ENCODE measurements at regions of chr1 and their contacts with region 1.

Region 1: DNA sequence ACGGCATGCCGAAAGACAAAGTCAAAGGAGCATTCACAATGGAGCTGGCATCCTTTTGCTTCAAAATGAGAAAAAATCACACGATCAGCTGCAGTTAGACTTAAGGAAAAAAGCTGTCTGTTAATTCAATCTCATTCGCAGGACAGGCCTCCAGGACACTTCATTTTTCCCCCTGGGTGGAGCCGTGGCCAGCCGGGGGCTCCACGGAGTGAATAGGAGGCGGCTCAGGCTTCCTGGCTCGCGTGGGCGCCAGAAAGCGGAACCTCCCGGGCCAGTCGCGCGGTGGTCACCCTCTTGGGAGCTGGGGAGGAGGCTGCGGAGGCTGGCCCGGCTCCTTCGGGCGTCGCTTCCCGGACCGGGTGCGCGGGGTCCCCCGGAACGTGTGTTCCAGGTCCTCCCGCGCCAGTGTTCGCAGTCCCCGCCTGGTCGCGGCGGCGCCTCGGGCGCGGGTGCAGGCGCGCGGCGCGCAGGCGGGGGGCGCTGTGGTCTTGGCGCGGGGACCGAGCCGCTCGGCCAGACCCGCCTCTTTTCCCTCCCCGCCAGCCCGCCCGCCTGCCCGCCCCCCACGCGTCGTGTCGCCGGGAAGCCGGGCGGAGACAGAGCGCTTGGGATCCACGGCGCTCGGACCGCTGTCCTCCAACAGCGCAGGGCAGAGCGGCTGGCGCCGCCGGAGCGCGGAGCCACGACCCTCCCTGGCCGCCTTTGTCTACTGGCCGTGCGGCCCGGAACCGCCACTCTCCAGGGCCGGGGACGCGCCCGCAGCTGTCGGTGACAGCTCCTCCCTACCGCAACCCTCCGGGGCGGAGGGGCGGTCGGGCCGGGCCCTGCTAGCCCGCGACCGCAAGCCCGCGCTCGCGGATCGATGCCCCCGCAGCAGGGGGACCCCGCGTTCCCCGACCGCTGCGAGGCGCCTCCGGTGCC is at the start of gene RHOU:
- DNase-seq: peak; percentile 92
- H3K4me3 ChIP-seq: peak within 1 kb of the TSS; percentile 89 to 97 (median 96)
- H3K27ac ChIP-seq: peak within 1 kb of the TSS; percentile 90 to 95 (median 92)
- H3K4me1 ChIP-seq: peaks cover 15 to 47% (median 41%) of the 10 kb centered on the region in 4 donors
- H3K27me3 ChIP-seq: no peaks in the 10 kb centered on the region
- CTCF ChIP-seq: peak; percentile 94 to 96 (median 94)
- EP300 ChIP-seq: no peak
- POLR2A ChIP-seq: peak; percentile 36
- total RNA-seq, gene RHOU: 24.1 to 36.0 (median 26.0) TPM

Region 2: GRCh38 chr1:228794810-228795209 is 59.7 kb after region 1 on chr1:
- intact Hi-C with region 1: loop called (anchors 5 kb)
- DNase-seq: no peak
- H3K4me3 ChIP-seq: no peak overlapping the region
- H3K27ac ChIP-seq: no peak overlapping the region
- H3K4me1 ChIP-seq: peaks cover 0 to 29% (median 22%) of the 10 kb centered on the region in 4 donors
- H3K27me3 ChIP-seq: no peaks in the 10 kb centered on the region
- CTCF ChIP-seq: no peak
- EP300 ChIP-seq: no peak
- POLR2A ChIP-seq: no peak

Region 3: GRCh38 chr1:228902781-228903433 is 167.8 kb after region 1 on chr1:
- intact Hi-C with region 1: loop called (anchors 10 kb)
- DNase-seq: peak; percentile 98
- H3K4me3 ChIP-seq: peak overlapping the region in 2 of 4 donors; percentile 3 to 8
- H3K27ac ChIP-seq: peak overlapping the region; percentile 62 to 80 (median 70)
- H3K4me1 ChIP-seq: peaks cover 9 to 51% (median 47%) of the 10 kb centered on the region in 4 donors
- H3K27me3 ChIP-seq: no peaks in the 10 kb centered on the region
- CTCF ChIP-seq: no peak
- EP300 ChIP-seq: no peak
- POLR2A ChIP-seq: no peak

Region 4: GRCh38 chr1:229156872-229157271 is 421.7 kb after region 1 on chr1:
- intact Hi-C with region 1: loop called (anchors 2 kb)
- DNase-seq: no peak
- H3K4me3 ChIP-seq: no peak overlapping the region
- H3K27ac ChIP-seq: peak overlapping the region in 2 of 4 donors; percentile 22 to 30
- H3K4me1 ChIP-seq: peaks cover 7 to 25% (median 21%) of the 10 kb centered on the region in 4 donors
- H3K27me3 ChIP-seq: no peaks in the 10 kb centered on the region
- CTCF ChIP-seq: peak; percentile 59 to 75 (median 72)
- EP300 ChIP-seq: no peak
- POLR2A ChIP-seq: no peak

Region 5: DNA sequence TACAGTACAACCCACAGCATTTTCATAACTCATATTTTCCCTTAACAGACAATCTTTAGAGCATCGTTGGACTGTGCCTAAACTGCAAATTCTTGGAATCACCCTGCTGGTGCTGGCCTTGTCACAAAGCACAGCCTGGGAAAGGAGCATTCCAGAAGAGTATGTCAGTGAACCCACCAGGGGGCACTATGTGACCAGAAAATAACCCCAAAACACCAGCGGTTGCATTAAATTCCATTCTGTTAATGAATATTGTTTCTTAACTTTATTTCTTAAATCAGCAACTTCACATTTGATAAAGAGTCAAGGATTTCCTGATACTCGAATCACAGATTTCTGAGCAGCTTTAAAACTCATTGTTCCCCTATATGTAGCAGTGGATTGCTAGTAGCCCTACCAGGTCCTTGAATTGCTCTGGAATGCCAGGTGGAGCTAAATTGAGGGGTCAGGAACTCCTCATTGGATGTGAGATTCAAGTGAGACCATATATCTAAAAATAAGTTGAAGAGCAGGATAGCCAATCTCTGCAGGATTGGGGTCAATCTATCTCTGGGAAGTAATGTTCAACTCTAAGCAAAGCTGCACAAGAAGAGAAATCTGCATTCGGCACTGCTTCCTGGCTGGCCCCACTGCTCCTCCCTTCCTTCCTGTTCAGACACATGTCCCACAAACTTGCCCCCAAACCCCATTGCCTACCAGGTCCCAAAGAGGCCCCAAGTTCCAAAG is 523.1 kb after region 1 on chr1:
- intact Hi-C with region 1: loop called (anchors 10 kb)
- DNase-seq: no peak
- H3K4me3 ChIP-seq: no peak overlapping the region
- H3K27ac ChIP-seq: no peak overlapping the region
- H3K4me1 ChIP-seq: peaks cover 7 to 15% (median 12%) of the 10 kb centered on the region in 4 donors
- H3K27me3 ChIP-seq: no peaks in the 10 kb centered on the region
- CTCF ChIP-seq: peak; percentile 78 to 91 (median 79)
- EP300 ChIP-seq: no peak
- POLR2A ChIP-seq: no peak